Right cardiac atrium (tissue), 5 donors: ENCODE measurements at regions of chr3 and their contacts with region 1.

Region 1: GRCh38 chr3:42880601-42881451 is 5.1 kb upstream of the CYP8B1 start:
- DNase-seq: peak; percentile 87 to 94 (median 94)
- ATAC-seq: peak; percentile 98
- H3K4me3 ChIP-seq: peak overlapping the region; percentile 58
- H3K27ac ChIP-seq: no peak overlapping the region
- H3K4me1 ChIP-seq: no peaks in the 10 kb centered on the region
- H3K27me3 ChIP-seq: no peaks in the 10 kb centered on the region

Region 2: GRCh38 chr3:42780892-42781700 is 99.7 kb before region 1 on chr3:
- intact Hi-C with region 1: loop called in 3 of 4 experiments (anchors 2 to 5 kb)
- DNase-seq: no peak
- ATAC-seq: peak; percentile 67 to 70
- H3K4me3 ChIP-seq: no peak overlapping the region
- H3K27ac ChIP-seq: no peak overlapping the region
- H3K4me1 ChIP-seq: no peaks in the 10 kb centered on the region
- H3K27me3 ChIP-seq: no peaks in the 10 kb centered on the region

Region 3: GRCh38 chr3:42831321-42831713 is 49.5 kb before region 1 on chr3:
- intact Hi-C with region 1: loop called (anchors 2 to 5 kb)
- DNase-seq: peak; percentile 64 to 84 (median 82)
- ATAC-seq: peak; percentile 59
- H3K4me3 ChIP-seq: no peak overlapping the region
- H3K27ac ChIP-seq: no peak overlapping the region
- H3K4me1 ChIP-seq: peaks cover 3% of the 10 kb centered on the region
- H3K27me3 ChIP-seq: no peaks in the 10 kb centered on the region

Region 4: GRCh38 chr3:42839616-42840015 is 41.2 kb before region 1 on chr3:
- intact Hi-C with region 1: loop called in 2 of 4 experiments (anchors 5 kb)
- DNase-seq: peak in 1 of 3 donors; percentile 58
- ATAC-seq: peak; percentile 77 to 81
- H3K4me3 ChIP-seq: no peak overlapping the region
- H3K27ac ChIP-seq: no peak overlapping the region
- H3K4me1 ChIP-seq: peaks cover 5% of the 10 kb centered on the region
- H3K27me3 ChIP-seq: no peaks in the 10 kb centered on the region

Region 5: GRCh38 chr3:43223670-43224364 is 343.0 kb after region 1 on chr3:
- intact Hi-C with region 1: no loop called
- DNase-seq: no peak
- ATAC-seq: no peak
- H3K4me3 ChIP-seq: no peak overlapping the region
- H3K27ac ChIP-seq: no peak overlapping the region
- H3K4me1 ChIP-seq: no peaks in the 10 kb centered on the region
- H3K27me3 ChIP-seq: no peaks in the 10 kb centered on the region